ENCODE measurements at regions of chr12 and their contacts with region 1.

Region 1: GRCh38 chr12:16939871-16940306 is 333.9 kb upstream of the LMO3 start:
- DNase-seq: peak; percentile 90
- H3K4me3 ChIP-seq: no peak overlapping the region
- H3K27ac ChIP-seq: peak overlapping the region; percentile 8
- H3K4me1 ChIP-seq: no peaks in the 10 kb centered on the region
- H3K27me3 ChIP-seq: no peaks in the 10 kb centered on the region
- CTCF ChIP-seq: peak; percentile 92

Region 2: GRCh38 chr12:16385782-16386646 is 553.9 kb before region 1 on chr12:
- CTCF ChIA-PET with region 1: no interaction called
- POLR2A ChIA-PET with region 1: no interaction called
- intact Hi-C with region 1: loop called (anchors 10 kb)
- DNase-seq: peak; percentile 91
- H3K4me3 ChIP-seq: no peak overlapping the region
- H3K27ac ChIP-seq: peak overlapping the region; percentile 48
- H3K4me1 ChIP-seq: peaks cover 13% of the 10 kb centered on the region
- H3K27me3 ChIP-seq: no peaks in the 10 kb centered on the region
- CTCF ChIP-seq: peak; percentile 75

Region 3: GRCh38 chr12:16691624-16692023 is 248.3 kb before region 1 on chr12:
- CTCF ChIA-PET with region 1: no interaction called
- POLR2A ChIA-PET with region 1: no interaction called
- intact Hi-C with region 1: no loop called
- DNase-seq: no peak
- H3K4me3 ChIP-seq: no peak overlapping the region
- H3K27ac ChIP-seq: no peak overlapping the region
- H3K4me1 ChIP-seq: no peaks in the 10 kb centered on the region
- H3K27me3 ChIP-seq: no peaks in the 10 kb centered on the region
- CTCF ChIP-seq: no peak

Region 4: GRCh38 chr12:17215759-17216570 is 276.1 kb after region 1 on chr12:
- CTCF ChIA-PET with region 1: no interaction called
- POLR2A ChIA-PET with region 1: no interaction called
- intact Hi-C with region 1: no loop called
- DNase-seq: peak; percentile 85
- H3K4me3 ChIP-seq: peak overlapping the region; percentile 19
- H3K27ac ChIP-seq: peak overlapping the region; percentile 51
- H3K4me1 ChIP-seq: peaks cover 22% of the 10 kb centered on the region
- H3K27me3 ChIP-seq: no peaks in the 10 kb centered on the region
- CTCF ChIP-seq: peak; percentile 59

Region 5: DNA sequence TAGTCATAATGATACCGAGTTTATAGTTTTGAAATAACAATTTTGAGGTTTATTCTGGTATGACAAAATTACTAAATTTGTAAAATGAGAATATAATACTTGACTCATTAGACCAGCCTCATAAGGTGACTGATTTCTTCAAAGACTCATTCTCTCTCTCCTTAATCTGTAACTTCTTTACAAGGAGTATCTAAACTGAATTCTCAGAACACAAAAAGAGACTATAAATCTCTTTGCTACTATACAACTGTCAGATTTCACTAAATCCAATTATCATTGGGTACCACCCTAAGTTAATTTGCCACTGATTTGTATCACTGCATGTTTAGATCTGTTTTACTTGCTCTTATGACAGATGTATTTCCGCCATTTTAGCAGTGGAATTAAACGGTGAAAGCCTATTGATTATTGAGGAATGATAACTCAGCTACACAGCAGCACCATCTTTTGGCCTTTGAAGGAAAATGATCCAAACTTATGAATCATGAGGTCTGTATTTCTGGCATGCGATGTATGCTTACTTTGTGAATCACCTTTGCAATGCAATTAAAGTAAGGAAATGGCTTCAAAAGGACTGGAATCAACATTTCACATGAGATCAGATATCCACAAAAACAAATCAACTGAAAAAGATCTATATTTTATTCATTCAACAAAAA is 988.9 kb after region 1 on chr12:
- CTCF ChIA-PET with region 1: interaction called, 11 read pairs
- POLR2A ChIA-PET with region 1: no interaction called
- intact Hi-C with region 1: no loop called
- DNase-seq: peak; percentile 84
- H3K4me3 ChIP-seq: no peak overlapping the region
- H3K27ac ChIP-seq: no peak overlapping the region
- H3K4me1 ChIP-seq: peaks cover 24% of the 10 kb centered on the region
- H3K27me3 ChIP-seq: no peaks in the 10 kb centered on the region
- CTCF ChIP-seq: peak; percentile 53

Region 6: GRCh38 chr12:17976202-17976601 is 1036.3 kb after region 1 on chr12:
- CTCF ChIA-PET with region 1: no interaction called
- POLR2A ChIA-PET with region 1: no interaction called
- intact Hi-C with region 1: loop called (anchors 10 kb)
- DNase-seq: peak; percentile 63
- H3K4me3 ChIP-seq: no peak overlapping the region
- H3K27ac ChIP-seq: no peak overlapping the region
- H3K4me1 ChIP-seq: no peaks in the 10 kb centered on the region
- H3K27me3 ChIP-seq: no peaks in the 10 kb centered on the region
- CTCF ChIP-seq: peak; percentile 70

Region 7: DNA sequence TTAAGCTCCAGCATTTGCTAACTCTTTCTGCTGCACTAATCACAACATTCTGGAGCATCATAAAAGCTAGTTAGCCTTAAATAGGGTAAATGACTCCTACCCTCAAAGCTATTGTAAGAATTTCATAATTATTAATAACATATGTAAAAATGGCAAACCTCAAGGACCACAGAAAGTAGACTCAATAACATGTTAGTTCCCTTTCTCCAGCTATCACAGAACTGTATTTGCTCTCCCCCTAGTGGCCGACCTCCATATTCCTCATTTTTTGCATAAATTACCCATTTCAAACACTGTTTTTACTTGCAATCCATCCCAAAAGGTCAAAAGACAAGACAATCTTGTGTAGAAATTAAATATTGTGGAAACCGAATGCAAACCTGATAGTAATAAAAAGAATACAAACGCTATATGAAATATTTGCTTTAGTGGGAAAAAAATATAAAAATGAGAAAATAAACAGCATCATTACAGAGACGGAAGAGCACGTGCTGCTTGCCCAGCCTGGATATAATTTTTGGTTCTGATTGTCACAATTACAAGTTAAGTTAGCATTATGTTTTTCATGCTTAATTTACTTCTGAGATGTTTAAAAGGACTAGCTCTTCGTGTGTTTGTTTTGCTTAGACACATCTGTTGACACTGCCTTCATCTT is 1052.2 kb after region 1 on chr12:
- CTCF ChIA-PET with region 1: no interaction called
- POLR2A ChIA-PET with region 1: no interaction called
- intact Hi-C with region 1: loop called (anchors 5 kb)
- DNase-seq: peak; percentile 77
- H3K4me3 ChIP-seq: no peak overlapping the region
- H3K27ac ChIP-seq: no peak overlapping the region
- H3K4me1 ChIP-seq: no peaks in the 10 kb centered on the region
- H3K27me3 ChIP-seq: no peaks in the 10 kb centered on the region
- CTCF ChIP-seq: peak; percentile 88